ENCODE measurements at regions of chr16 and their contacts with region 1.

Region 1: GRCh38 chr16:49855280-49855821 is 561 bp downstream of the ZNF423 start:
- DNase-seq: peak; percentile 44 to 73 (median 46)
- H3K4me3 ChIP-seq: peak overlapping the region; percentile 46 to 78 (median 64)
- H3K27ac ChIP-seq: no peak overlapping the region
- H3K4me1 ChIP-seq: peaks cover 0 to 37% (median 33%) of the 10 kb centered on the region in 4 experiments
- H3K27me3 ChIP-seq: peaks cover 0 to 36% (median 14%) of the 10 kb centered on the region in 5 experiments

Region 2: GRCh38 chr16:49890876-49891275 is 35.5 kb after region 1 on chr16:
- CTCF ChIA-PET with region 1: interaction called, 21 read pairs
- POLR2A ChIA-PET with region 1: no interaction called
- DNase-seq: peak; percentile 68 to 87 (median 84)
- H3K4me3 ChIP-seq: no peak overlapping the region
- H3K27ac ChIP-seq: no peak overlapping the region
- H3K4me1 ChIP-seq: peaks cover 0 to 6% (median 0%) of the 10 kb centered on the region in 4 experiments
- H3K27me3 ChIP-seq: no peaks in the 10 kb centered on the region